ENCODE measurements at regions of chr3 and their contacts with region 1.

Region 1: GRCh38 chr3:71069797-71070196 is 513.7 kb downstream of the FOXP1 start:
- DNase-seq: peak; percentile 75
- ATAC-seq: peak; percentile 45

Region 2: DNA sequence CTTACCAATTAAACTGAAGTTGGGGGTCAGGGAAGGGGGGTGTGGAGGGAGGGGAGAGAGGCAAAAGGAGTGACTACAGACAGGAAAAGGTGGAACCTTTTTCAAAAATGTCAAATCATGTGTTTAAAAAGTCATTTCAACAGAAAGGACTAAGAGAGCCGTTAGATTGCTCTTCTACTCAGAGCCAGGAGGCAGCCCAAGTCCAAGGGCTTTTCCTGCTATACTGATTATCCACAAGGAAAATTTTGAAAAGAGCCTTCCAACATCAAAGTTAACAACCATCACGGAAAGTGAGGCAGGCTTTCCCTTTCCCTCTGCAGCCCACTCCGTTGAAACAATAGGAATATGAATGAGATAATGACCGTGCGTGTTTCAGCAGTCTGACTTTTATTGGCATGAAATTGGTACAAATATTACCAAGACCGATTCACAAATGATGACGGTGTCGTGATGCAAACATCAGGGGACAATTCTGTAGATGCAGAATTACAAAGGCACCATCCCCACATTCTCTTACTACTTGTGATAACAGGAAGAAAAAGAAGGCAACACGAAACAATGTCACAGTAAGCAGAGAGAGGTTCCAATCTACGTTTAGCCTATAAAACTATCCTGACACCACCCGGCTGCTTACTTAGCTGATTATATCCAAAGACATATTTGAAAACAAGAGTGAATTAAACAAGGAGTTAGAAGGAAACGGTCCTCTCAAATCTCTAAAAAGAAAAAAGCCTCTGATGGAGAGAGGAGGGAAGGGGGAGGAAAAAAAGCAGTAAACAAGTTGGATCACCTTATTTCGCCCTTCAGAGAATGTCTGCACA is 60.0 kb after region 1 on chr3:
- intact Hi-C with region 1: loop called (anchors 5 kb)
- DNase-seq: no peak
- ATAC-seq: peak; percentile 20